ENCODE measurements at regions of chr12 and their contacts with region 1.

Region 1: GRCh38 chr12:53159195-53159839 is 21.2 kb upstream of the ZNF740 start:
- DNase-seq: peak; percentile 78
- ATAC-seq: peak; percentile 100
- H3K4me3 Mint-ChIP-seq: no peak overlapping the region
- H3K27ac Mint-ChIP-seq: no peak overlapping the region
- H3K4me1 Mint-ChIP-seq: peaks cover 5% of the 10 kb centered on the region
- H3K27me3 Mint-ChIP-seq: no peaks in the 10 kb centered on the region
- CTCF ChIP-seq: peak; percentile 13

Region 2: GRCh38 chr12:52984134-52984533 is 175.2 kb before region 1 on chr12:
- CTCF ChIA-PET with region 1: no interaction called
- POLR2A ChIA-PET with region 1: no interaction called
- intact Hi-C with region 1: no loop called
- DNase-seq: no peak
- ATAC-seq: no peak
- H3K4me3 Mint-ChIP-seq: no peak overlapping the region
- H3K27ac Mint-ChIP-seq: no peak overlapping the region
- H3K4me1 Mint-ChIP-seq: no peaks in the 10 kb centered on the region
- H3K27me3 Mint-ChIP-seq: peaks cover 25% of the 10 kb centered on the region
- CTCF ChIP-seq: no peak

Region 3: DNA sequence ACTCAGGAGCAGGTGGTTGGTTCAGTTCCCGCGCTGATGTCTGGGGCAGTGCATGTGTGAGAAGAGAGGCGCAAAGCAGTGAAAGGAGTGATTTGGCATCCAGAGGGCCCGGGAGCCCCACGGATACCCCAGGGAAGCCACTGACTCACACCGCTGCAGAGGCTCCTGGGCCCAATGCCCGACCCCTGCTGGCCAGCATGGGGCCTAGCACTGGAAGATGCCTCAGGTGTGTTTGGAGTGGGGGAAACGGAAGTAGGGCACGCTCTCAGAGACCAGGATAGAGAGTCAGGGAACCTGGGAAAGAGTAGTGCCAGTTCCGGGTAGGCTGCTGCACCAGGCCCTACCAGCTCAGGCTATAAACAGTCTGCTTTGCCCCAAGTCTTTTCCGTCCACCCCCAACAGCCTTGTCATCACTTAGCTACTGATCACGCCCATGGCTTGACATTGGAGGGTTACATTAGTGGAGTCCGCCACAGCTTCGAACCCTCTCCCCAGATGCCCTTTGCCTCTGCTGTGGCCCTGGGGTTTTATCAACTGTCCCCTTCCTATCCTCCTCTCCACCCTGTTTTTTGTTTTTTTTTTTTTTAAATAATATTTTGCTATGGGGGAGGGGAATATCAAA is 30.9 kb after region 1 on chr12:
- CTCF ChIA-PET with region 1: interaction called, 43 read pairs
- POLR2A ChIA-PET with region 1: interaction called, 5 read pairs
- intact Hi-C with region 1: loop called (anchors 1 kb)
- DNase-seq: no peak
- ATAC-seq: peak; percentile 89
- H3K4me3 Mint-ChIP-seq: no peak overlapping the region
- H3K27ac Mint-ChIP-seq: peak overlapping the region; percentile 31
- H3K4me1 Mint-ChIP-seq: peaks cover 8% of the 10 kb centered on the region
- H3K27me3 Mint-ChIP-seq: no peaks in the 10 kb centered on the region
- CTCF ChIP-seq: no peak

Region 4: GRCh38 chr12:53205747-53206419 is 46.6 kb after region 1 on chr12:
- CTCF ChIA-PET with region 1: interaction called, 12 read pairs
- POLR2A ChIA-PET with region 1: no interaction called
- intact Hi-C with region 1: loop called (anchors 1 kb)
- DNase-seq: peak; percentile 50
- ATAC-seq: peak; percentile 66
- H3K4me3 Mint-ChIP-seq: peak overlapping the region; percentile 89
- H3K27ac Mint-ChIP-seq: peak overlapping the region; percentile 83
- H3K4me1 Mint-ChIP-seq: peaks cover 93% of the 10 kb centered on the region
- H3K27me3 Mint-ChIP-seq: no peaks in the 10 kb centered on the region
- CTCF ChIP-seq: no peak

Region 5: GRCh38 chr12:53213348-53213747 is 54.0 kb after region 1 on chr12:
- CTCF ChIA-PET with region 1: interaction called, 18 read pairs
- POLR2A ChIA-PET with region 1: interaction called, 6 read pairs
- intact Hi-C with region 1: loop called (anchors 1 kb)
- DNase-seq: peak; percentile 82
- ATAC-seq: peak; percentile 75
- H3K4me3 Mint-ChIP-seq: no peak overlapping the region
- H3K27ac Mint-ChIP-seq: peak overlapping the region; percentile 6
- H3K4me1 Mint-ChIP-seq: peaks cover 76% of the 10 kb centered on the region
- H3K27me3 Mint-ChIP-seq: no peaks in the 10 kb centered on the region
- CTCF ChIP-seq: peak; percentile 49

Region 6: GRCh38 chr12:53287741-53288216 is 128.5 kb after region 1 on chr12:
- CTCF ChIA-PET with region 1: interaction called, 44 read pairs
- POLR2A ChIA-PET with region 1: no interaction called
- intact Hi-C with region 1: loop called (anchors 1 kb)
- DNase-seq: peak; percentile 53
- ATAC-seq: peak; percentile 100
- H3K4me3 Mint-ChIP-seq: no peak overlapping the region
- H3K27ac Mint-ChIP-seq: no peak overlapping the region
- H3K4me1 Mint-ChIP-seq: peaks cover 4% of the 10 kb centered on the region
- H3K27me3 Mint-ChIP-seq: no peaks in the 10 kb centered on the region
- CTCF ChIP-seq: no peak